H1 (cell line): ENCODE measurements at regions of chr2 and their contacts with region 1.

Region 1: DNA sequence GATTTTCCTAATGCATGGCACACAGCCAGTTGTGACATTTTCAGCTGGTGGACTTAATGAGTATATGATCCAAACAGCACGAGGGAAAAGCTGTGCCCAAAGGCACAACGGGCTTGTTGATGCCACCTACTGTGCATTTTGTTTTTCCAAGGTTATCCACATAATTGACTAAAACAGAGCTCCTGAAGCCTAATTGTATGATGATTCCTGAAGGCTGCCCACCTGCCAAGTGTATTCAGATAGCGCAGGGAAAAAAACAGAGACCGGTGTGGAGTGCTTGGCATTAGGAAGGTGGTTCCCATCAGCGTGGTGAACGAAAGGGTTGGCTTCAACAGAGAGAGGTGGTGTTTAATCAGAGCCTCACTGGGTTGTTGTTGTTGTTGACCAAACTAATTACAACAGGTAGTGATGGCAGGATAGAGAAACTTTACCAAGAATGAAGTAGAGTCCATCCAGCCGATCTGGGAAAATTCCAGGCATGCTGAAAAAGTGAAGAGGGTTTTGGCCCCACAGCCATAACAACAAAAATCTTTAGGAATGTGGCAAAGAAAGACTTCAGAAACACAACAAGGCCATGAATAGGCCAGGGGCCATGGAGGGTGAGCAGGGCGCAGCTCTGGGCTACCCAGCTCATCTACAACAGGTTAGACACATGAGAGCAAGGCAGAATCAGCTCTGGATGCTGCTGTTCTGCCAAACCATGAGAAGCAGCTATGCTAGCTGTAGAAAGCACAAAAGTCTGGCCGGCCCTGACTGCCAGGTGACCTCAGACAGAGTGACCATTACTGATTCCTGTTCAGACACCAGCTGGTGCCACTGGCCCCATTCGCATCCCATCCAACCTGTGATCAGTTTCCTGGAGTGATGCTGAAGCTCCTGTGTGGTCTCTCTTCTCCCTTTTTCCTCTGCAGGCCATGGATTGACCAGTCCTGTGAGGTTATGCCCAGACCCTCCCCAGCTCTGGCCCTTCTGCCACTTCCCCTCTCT is 14.6 kb downstream of the RBMS1 start:
- DNase-seq: no peak
- H3K4me3 ChIP-seq: no peak overlapping the region
- H3K27ac ChIP-seq: no peak overlapping the region
- H3K4me1 ChIP-seq: peaks cover 0 to 15% (median 5%) of the 10 kb centered on the region in 4 experiments; a peak in 4 of 7 replicates
- H3K27me3 ChIP-seq: no peaks in the 10 kb centered on the region
- CTCF ChIP-seq: no peak
- EP300 ChIP-seq: no peak
- POLR2A ChIP-seq: no peak
- RAD21 ChIP-seq: no peak

Region 2: GRCh38 chr2:160429248-160430000 is 49.6 kb before region 1 on chr2:
- CTCF ChIA-PET with region 1: interaction called, 11 read pairs
- POLR2A ChIA-PET with region 1: no interaction called
- DNase-seq: no peak
- H3K4me3 ChIP-seq: no peak overlapping the region
- H3K27ac ChIP-seq: no peak overlapping the region
- H3K4me1 ChIP-seq: peaks cover 0 to 4% (median 2%) of the 10 kb centered on the region in 4 experiments; a peak in 2 of 7 replicates
- H3K27me3 ChIP-seq: no peaks in the 10 kb centered on the region
- CTCF ChIP-seq: peak in 1 of 3 experiments; percentile 20; a peak in 2 of 4 replicates
- EP300 ChIP-seq: no peak
- POLR2A ChIP-seq: no peak
- RAD21 ChIP-seq: no peak

Region 3: DNA sequence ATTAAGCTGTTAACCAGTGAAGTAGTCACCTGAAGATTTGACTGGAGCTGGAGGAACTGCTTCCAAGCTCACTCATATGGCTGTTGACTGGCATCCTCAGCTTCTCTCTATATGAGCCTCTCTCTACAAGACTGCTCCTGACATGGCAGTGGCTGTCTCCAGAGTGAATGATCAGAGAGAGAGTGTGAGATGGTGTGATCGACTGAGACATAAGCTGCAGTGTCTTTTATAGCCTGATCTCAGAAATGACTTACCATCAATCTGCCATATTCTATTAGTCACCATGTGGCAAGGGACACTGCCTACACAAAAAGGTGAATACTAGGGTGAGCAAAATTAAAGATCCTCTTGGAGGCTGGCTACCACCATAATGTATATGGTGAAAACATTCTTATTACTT is 22.4 kb after region 1 on chr2:
- CTCF ChIA-PET with region 1: no interaction called
- POLR2A ChIA-PET with region 1: no interaction called
- DNase-seq: no peak
- H3K4me3 ChIP-seq: no peak overlapping the region
- H3K27ac ChIP-seq: no peak overlapping the region
- H3K4me1 ChIP-seq: no peaks in the 10 kb centered on the region
- H3K27me3 ChIP-seq: peaks cover 0 to 1% (median 0%) of the 10 kb centered on the region in 4 experiments; a peak in 1 of 7 replicates
- CTCF ChIP-seq: no peak
- EP300 ChIP-seq: no peak
- POLR2A ChIP-seq: no peak
- RAD21 ChIP-seq: no peak

Region 4: DNA sequence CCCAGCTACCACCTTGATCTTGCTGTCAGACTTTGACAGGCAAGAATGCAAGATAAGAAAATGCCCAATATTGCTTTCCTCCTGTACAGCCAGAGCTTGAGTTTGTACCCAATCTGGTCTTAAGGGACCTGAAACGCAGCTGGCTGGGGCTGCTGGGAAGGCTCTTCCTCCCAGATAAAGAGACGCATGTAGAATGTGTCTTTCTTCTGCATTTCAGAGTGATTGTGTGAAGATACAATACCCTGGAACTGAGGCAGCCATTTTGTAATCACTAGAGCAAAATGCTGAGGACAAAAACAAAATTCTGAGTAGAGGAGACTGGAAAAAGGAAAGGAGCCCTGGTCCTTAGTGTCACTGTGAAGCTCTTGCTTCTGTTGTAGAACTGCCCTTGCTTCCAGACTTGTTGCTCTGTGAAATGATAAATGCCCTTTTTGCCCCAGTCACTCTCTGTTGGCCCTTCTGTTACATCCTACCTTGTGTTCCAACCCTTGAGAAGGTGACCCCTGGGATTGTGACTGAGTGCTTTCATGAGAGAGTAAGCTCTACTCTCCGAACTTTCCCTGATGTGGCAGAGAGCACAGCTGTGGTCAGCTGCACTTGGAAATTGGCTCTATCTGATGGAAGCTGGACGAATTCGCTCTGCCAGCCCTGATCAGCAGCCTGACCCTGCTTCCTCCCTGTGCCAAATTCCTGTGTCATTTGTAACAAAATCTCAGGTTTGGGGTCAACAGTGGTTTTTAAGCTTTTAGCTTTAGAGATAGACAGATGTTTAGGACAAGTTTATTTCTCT is 152.0 kb after region 1 on chr2:
- CTCF ChIA-PET with region 1: no interaction called
- POLR2A ChIA-PET with region 1: no interaction called
- DNase-seq: no peak
- H3K4me3 ChIP-seq: no peak overlapping the region
- H3K27ac ChIP-seq: no peak overlapping the region
- H3K4me1 ChIP-seq: peaks cover 0 to 3% (median 1%) of the 10 kb centered on the region in 4 experiments; a peak in 3 of 7 replicates
- H3K27me3 ChIP-seq: no peaks in the 10 kb centered on the region
- CTCF ChIP-seq: no peak
- EP300 ChIP-seq: no peak
- POLR2A ChIP-seq: no peak
- RAD21 ChIP-seq: no peak